HepG2 (cell line): ENCODE measurements at regions of chr3 and their contacts with region 1.

Region 1: GRCh38 chr3:29128001-29128400 is 152.9 kb upstream of the RBMS3 start:
- DNase-seq: no peak
- ATAC-seq: no peak
- H3K4me3 ChIP-seq: no peak overlapping the region
- H3K27ac ChIP-seq: no peak overlapping the region
- H3K4me1 ChIP-seq: no peaks in the 10 kb centered on the region
- H3K27me3 ChIP-seq: no peaks in the 10 kb centered on the region
- CTCF ChIP-seq: no peak
- EP300 ChIP-seq: no peak
- POLR2A ChIP-seq: no peak
- RAD21 ChIP-seq: no peak

Region 2: GRCh38 chr3:29072611-29073010 is 55.4 kb before region 1 on chr3:
- CTCF ChIA-PET with region 1: no interaction called
- POLR2A ChIA-PET with region 1: no interaction called
- in situ Hi-C with region 1: no loop called
- intact Hi-C with region 1: no loop called
- DNase-seq: no peak
- ATAC-seq: no peak
- H3K4me3 ChIP-seq: no peak overlapping the region
- H3K27ac ChIP-seq: no peak overlapping the region
- H3K4me1 ChIP-seq: no peaks in the 10 kb centered on the region
- H3K27me3 ChIP-seq: no peaks in the 10 kb centered on the region
- CTCF ChIP-seq: no peak
- EP300 ChIP-seq: no peak
- POLR2A ChIP-seq: no peak
- RAD21 ChIP-seq: no peak

Region 3: DNA sequence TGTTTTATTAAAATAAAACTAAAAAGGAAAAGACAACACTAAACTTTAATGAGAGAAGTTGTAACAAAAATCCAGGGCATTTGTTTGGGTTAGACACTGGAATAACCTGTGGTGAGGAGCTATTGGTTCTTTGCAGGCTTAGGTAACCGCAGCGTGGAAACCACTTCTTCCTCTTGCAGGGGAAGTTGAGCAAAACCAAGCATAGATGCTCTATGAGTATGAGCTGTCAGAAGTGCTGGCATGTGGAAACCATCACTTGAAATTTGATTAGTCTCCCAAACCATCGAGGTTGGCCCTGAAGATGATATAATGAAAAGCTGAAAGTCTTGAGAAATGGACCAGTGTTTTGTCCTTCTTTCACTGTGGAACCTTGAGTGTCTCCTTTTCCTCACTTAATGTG is 25.8 kb after region 1 on chr3:
- CTCF ChIA-PET with region 1: no interaction called
- POLR2A ChIA-PET with region 1: no interaction called
- in situ Hi-C with region 1: no loop called
- intact Hi-C with region 1: no loop called
- DNase-seq: no peak
- ATAC-seq: no peak
- H3K4me3 ChIP-seq: no peak overlapping the region
- H3K27ac ChIP-seq: no peak overlapping the region
- H3K4me1 ChIP-seq: no peaks in the 10 kb centered on the region
- H3K27me3 ChIP-seq: no peaks in the 10 kb centered on the region
- CTCF ChIP-seq: no peak
- EP300 ChIP-seq: no peak
- POLR2A ChIP-seq: no peak
- RAD21 ChIP-seq: no peak

Region 4: GRCh38 chr3:31048143-31048542 is 1920.1 kb after region 1 on chr3:
- CTCF ChIA-PET with region 1: no interaction called
- POLR2A ChIA-PET with region 1: no interaction called
- in situ Hi-C with region 1: no loop called
- intact Hi-C with region 1: loop called (anchors 5 kb)
- DNase-seq: no peak
- ATAC-seq: no peak
- H3K4me3 ChIP-seq: no peak overlapping the region
- H3K27ac ChIP-seq: no peak overlapping the region
- H3K4me1 ChIP-seq: no peaks in the 10 kb centered on the region
- H3K27me3 ChIP-seq: no peaks in the 10 kb centered on the region; a peak in 1 of 5 replicates
- CTCF ChIP-seq: no peak
- EP300 ChIP-seq: no peak
- POLR2A ChIP-seq: no peak
- RAD21 ChIP-seq: no peak